CD14-positive monocyte (primary cell): ENCODE measurements at regions of chr11 and their contacts with region 1.

Region 1: GRCh38 chr11:73218106-73218829 is at the start of gene P2RY2:
- DNase-seq: peak; percentile 77 to 88 (median 80)
- H3K4me3 ChIP-seq: peak within 1 kb of the TSS; percentile 66 to 85 (median 85)
- H3K4me3 Mint-ChIP-seq: peak within 1 kb of the TSS; percentile 94 to 98
- H3K27ac ChIP-seq: peak within 1 kb of the TSS; percentile 79 to 82
- H3K27ac Mint-ChIP-seq: peak within 1 kb of the TSS; percentile 93 to 97 (median 96)
- H3K4me1 ChIP-seq: peaks cover 91 to 94% of the 10 kb centered on the region in 2 donors
- H3K4me1 Mint-ChIP-seq: peaks cover 90% of the 10 kb centered on the region
- H3K27me3 ChIP-seq: no peaks in the 10 kb centered on the region
- H3K27me3 Mint-ChIP-seq: peaks cover 0 to 2% (median 0%) of the 10 kb centered on the region in 3 donors
- CTCF ChIP-seq: peak; percentile 79
- polyA plus RNA-seq, gene P2RY2: 2.8 to 24.1 (median 12.7) TPM

Region 2: DNA sequence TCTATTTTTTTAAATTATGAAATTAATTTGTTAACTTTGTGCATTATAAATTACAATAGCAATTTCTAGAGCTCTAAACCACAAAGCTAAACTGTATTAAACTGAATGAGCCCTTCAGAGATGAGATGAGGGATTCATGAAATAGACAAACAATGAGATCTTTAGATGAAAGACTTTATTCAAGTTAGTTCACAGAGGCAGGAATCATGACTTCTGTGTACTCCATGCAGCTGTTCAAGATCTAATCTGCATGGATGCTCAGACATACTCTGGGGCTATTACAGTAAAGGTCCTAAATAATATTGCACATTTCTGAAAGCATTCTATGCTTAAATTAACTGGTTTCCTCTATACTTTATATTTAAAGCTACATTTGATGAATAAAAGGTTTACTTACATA is 198.8 kb before region 1 on chr11:
- intact Hi-C with region 1: no loop called
- DNase-seq: no peak
- H3K4me3 ChIP-seq: no peak overlapping the region
- H3K4me3 Mint-ChIP-seq: no peak overlapping the region
- H3K27ac ChIP-seq: no peak overlapping the region
- H3K27ac Mint-ChIP-seq: no peak overlapping the region
- H3K4me1 ChIP-seq: no peaks in the 10 kb centered on the region
- H3K4me1 Mint-ChIP-seq: peaks cover 4% of the 10 kb centered on the region
- H3K27me3 ChIP-seq: no peaks in the 10 kb centered on the region
- H3K27me3 Mint-ChIP-seq: no peaks in the 10 kb centered on the region
- CTCF ChIP-seq: no peak

Region 3: DNA sequence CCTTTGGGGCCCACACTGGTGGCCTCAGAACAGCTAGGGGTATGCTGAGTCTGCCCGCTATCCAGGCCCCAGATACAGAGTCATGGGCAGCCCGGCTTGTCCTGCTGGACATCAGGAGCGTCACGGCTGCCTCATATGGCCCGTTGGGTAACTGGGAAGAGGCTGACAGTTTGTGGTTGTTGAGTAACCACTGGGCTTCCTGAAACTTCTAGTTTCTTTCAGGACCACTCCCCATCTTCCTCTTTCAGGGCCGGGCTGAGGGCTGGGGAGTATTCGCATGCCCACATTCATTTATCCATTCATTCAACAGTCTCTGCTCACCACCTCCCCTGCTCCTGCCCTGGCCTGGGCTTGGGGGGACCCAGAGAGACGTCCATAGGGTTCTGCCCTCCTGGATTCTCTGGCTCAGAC is 13.6 kb before region 1 on chr11:
- intact Hi-C with region 1: loop called in 1 of 2 experiments (anchors 1 kb)
- DNase-seq: peak; percentile 94 to 99 (median 97)
- H3K4me3 ChIP-seq: peak overlapping the region in 1 of 3 experiments; percentile 66
- H3K4me3 Mint-ChIP-seq: peak overlapping the region; percentile 67 to 86
- H3K27ac ChIP-seq: peak overlapping the region; percentile 85 to 91
- H3K27ac Mint-ChIP-seq: peak overlapping the region; percentile 90 to 99 (median 97)
- H3K4me1 ChIP-seq: peaks cover 72 to 76% of the 10 kb centered on the region in 2 donors
- H3K4me1 Mint-ChIP-seq: peaks cover 82% of the 10 kb centered on the region
- H3K27me3 ChIP-seq: no peaks in the 10 kb centered on the region
- H3K27me3 Mint-ChIP-seq: peaks cover 0 to 4% (median 1%) of the 10 kb centered on the region in 3 donors
- CTCF ChIP-seq: no peak